Mammary epithelial cell (primary cell): ENCODE measurements at regions of chr3 and their contacts with region 1.

Region 1: DNA sequence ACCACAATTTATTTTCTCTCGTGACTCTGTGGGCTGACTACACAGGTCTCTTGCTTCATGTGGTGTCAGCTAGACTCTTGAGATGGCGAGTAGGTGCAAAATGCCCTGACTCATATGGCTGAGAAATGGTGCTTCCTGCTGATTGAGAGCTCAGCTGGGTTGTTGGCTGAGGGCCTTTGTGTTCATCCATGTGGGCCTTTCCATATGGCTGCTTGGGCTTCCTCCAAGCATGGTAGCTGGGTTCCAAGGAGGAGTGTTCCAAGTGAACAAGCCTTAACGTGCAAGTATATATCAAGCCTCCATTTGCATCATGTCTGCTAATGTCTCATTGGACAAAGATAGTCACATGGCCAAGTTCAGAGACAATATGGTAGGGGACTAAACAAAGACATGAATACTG is 164.0 kb downstream of the PDCD6IP start:
- DNase-seq: no peak
- H3K4me3 ChIP-seq: no peak overlapping the region
- H3K27ac ChIP-seq: no peak overlapping the region
- H3K4me1 ChIP-seq: no peaks in the 10 kb centered on the region
- H3K27me3 ChIP-seq: no peaks in the 10 kb centered on the region
- CTCF ChIP-seq: no peak

Region 2: GRCh38 chr3:35883929-35884328 is 1921.5 kb after region 1 on chr3:
- CTCF ChIA-PET with region 1: no interaction called
- dilution Hi-C with region 1: no loop called
- in situ Hi-C with region 1: no loop called
- intact Hi-C with region 1: loop called (anchors 5 kb)
- DNase-seq: no peak
- H3K4me3 ChIP-seq: no peak overlapping the region
- H3K27ac ChIP-seq: no peak overlapping the region
- H3K4me1 ChIP-seq: no peaks in the 10 kb centered on the region
- H3K27me3 ChIP-seq: no peaks in the 10 kb centered on the region
- CTCF ChIP-seq: no peak